Activated CD8-positive, alpha-beta T cell treated with anti-CD3 and anti-CD28 coated beads for 36 hours (primary cell): ENCODE measurements at regions of chr13 and their contacts with region 1.

Region 1: DNA sequence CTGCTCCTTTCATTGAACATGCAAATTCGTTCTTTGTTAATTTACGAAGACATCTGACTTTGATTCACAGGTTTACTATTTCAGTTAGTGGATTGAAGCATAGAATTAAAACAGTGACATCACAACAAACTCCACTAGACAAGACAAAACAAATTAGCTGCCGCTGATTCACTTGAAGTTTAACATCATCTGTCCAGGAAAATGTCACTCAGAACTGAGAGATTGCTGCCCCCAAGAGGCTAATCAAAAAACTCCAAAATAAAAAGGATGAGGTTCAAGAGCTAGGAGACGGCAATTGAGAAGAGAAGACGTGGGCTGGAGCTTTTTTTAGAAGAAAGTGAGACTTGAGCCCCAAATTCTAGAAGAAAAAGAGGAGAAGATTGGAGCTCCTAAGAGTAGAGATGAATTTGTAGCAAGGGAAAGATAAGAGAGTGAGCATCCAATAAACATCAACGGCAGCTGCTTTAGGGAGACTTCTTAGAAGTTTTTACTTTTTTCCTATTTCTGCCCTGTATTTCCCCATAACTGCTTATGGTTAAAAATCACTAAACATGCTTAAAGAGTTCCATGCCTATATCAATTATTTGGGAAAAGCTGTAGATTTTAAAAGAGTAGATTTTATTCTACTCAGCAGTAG is 40.8 kb upstream of the TPP2 start:
- DNase-seq: peak; percentile 4
- ATAC-seq: peak; percentile 51
- H3K4me3 Mint-ChIP-seq: no peak overlapping the region
- H3K27ac Mint-ChIP-seq: no peak overlapping the region
- H3K4me1 Mint-ChIP-seq: peaks cover 2% of the 10 kb centered on the region
- H3K27me3 Mint-ChIP-seq: peaks cover 2% of the 10 kb centered on the region
- CTCF ChIP-seq: peak; percentile 77

Region 2: DNA sequence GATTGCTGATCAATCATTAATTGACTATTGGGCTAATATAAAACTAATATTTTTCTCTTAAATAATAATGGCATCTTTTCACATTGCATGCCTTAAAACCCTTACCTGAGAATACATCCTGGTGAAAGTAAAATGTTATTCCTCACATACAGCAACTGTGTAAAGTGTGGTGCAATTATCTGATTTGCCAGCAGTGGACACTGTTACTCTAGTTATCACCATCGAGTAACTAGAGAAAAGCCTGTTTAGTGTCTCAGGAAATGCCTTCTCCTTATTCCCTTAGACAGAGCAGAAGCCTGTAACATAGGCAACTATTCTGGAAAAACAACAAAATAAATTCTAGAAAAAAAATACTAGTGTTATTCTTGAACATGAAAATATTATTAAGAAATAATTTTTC is 614.0 kb before region 1 on chr13:
- CTCF ChIA-PET with region 1: interaction called, 5 read pairs
- POLR2A ChIA-PET with region 1: no interaction called
- intact Hi-C with region 1: loop called (anchors 10 kb)
- DNase-seq: peak; percentile 21
- ATAC-seq: no peak
- H3K4me3 Mint-ChIP-seq: no peak overlapping the region
- H3K27ac Mint-ChIP-seq: no peak overlapping the region
- H3K4me1 Mint-ChIP-seq: no peaks in the 10 kb centered on the region
- H3K27me3 Mint-ChIP-seq: no peaks in the 10 kb centered on the region
- CTCF ChIP-seq: peak; percentile 23

Region 3: DNA sequence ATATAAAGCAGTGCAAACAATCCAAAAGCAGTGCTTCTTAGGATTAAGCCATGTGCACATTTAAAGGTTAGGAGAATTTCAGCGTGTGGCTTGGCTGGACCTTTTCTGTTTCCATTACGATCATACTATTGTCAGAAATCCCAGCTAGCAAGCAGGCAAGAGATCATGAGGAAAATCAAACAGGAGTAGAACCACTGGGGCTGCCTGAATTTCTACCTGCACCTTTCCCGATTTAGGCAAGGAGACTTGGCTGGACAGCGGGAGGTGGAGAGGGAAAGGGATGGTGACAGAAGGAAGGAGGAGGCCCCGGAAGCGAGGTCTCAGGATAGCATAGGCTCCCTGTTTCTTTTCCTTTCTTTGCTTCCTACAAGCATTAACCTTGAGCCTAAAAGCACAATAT is 256.7 kb before region 1 on chr13:
- CTCF ChIA-PET with region 1: no interaction called
- POLR2A ChIA-PET with region 1: no interaction called
- intact Hi-C with region 1: no loop called
- DNase-seq: no peak
- ATAC-seq: no peak
- H3K4me3 Mint-ChIP-seq: no peak overlapping the region
- H3K27ac Mint-ChIP-seq: no peak overlapping the region
- H3K4me1 Mint-ChIP-seq: no peaks in the 10 kb centered on the region
- H3K27me3 Mint-ChIP-seq: peaks cover 4% of the 10 kb centered on the region
- CTCF ChIP-seq: no peak

Region 4: DNA sequence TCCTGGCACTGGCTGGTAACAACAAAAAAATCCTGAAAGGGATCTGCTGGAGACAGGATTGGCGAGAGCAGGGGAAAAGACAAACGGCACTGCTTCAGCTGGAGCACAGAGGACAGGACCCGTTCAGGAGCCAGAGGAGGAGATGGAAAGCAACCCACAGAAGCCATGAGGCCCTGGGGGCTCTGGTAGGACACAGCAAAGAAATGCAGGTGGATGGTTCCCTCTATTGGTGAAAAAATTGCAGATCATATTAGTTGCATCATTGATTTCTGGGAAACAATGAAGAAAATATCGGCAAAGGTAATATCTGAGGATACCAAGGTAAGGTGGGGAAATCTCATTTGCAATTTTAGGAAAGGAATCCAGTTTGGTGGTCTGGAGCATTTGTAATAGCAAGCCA is 15.0 kb after region 1 on chr13:
- CTCF ChIA-PET with region 1: interaction called, 13 read pairs
- POLR2A ChIA-PET with region 1: no interaction called
- intact Hi-C with region 1: no loop called
- DNase-seq: no peak
- ATAC-seq: no peak
- H3K4me3 Mint-ChIP-seq: no peak overlapping the region
- H3K27ac Mint-ChIP-seq: no peak overlapping the region
- H3K4me1 Mint-ChIP-seq: no peaks in the 10 kb centered on the region
- H3K27me3 Mint-ChIP-seq: peaks cover 9% of the 10 kb centered on the region
- CTCF ChIP-seq: no peak